ENCODE measurements at regions of chr16 and their contacts with region 1.

Region 1: GRCh38 chr16:71311553-71312158 is 22.5 kb upstream of the CMTR2 start:
- DNase-seq: peak; percentile 49
- H3K4me3 Mint-ChIP-seq: no peak overlapping the region
- H3K27ac Mint-ChIP-seq: no peak overlapping the region
- H3K4me1 Mint-ChIP-seq: no peaks in the 10 kb centered on the region
- H3K27me3 Mint-ChIP-seq: peaks cover 40% of the 10 kb centered on the region
- CTCF ChIP-seq: peak; percentile 81

Region 2: DNA sequence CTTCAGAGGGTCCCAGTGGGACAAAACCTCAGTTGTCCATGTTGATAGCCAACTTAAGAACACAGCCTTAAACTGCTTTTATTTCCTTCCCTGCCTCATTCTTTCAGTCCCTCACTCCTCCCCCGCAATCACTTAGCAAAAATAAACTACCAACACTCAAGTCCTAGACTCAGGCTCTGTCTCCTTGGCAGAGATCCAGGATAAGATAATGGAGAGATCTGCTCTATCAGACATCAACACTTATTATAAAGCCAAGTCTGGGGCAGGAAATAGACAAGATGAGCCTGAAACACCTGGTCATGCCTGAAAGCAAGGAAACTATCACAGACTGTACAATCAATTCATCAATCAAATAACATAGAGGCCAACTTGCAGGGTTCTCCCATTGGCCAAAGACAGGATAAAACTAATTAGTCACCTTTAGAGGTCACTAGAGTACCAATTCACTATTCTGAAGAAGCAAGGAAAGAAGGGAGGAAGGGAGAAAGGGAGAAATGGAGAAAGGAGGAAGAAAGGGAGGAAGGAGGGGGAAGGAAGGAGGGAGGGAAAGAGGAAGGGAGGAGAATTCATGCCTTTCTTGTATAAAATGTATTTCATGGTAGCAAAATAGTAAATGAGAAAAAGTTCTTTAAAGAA is 96.8 kb before region 1 on chr16:
- CTCF ChIA-PET with region 1: interaction called, 6 read pairs
- POLR2A ChIA-PET with region 1: no interaction called
- intact Hi-C with region 1: loop called (anchors 1 kb)
- DNase-seq: peak; percentile 20
- H3K4me3 Mint-ChIP-seq: no peak overlapping the region
- H3K27ac Mint-ChIP-seq: no peak overlapping the region
- H3K4me1 Mint-ChIP-seq: no peaks in the 10 kb centered on the region
- H3K27me3 Mint-ChIP-seq: peaks cover 51% of the 10 kb centered on the region
- CTCF ChIP-seq: peak; percentile 20

Region 3: GRCh38 chr16:71293919-71294318 is 17.7 kb before region 1 on chr16:
- CTCF ChIA-PET with region 1: interaction called, 43 read pairs
- POLR2A ChIA-PET with region 1: interaction called, 3 read pairs
- intact Hi-C with region 1: no loop called
- DNase-seq: no peak
- H3K4me3 Mint-ChIP-seq: no peak overlapping the region
- H3K27ac Mint-ChIP-seq: no peak overlapping the region
- H3K4me1 Mint-ChIP-seq: peaks cover 6% of the 10 kb centered on the region
- H3K27me3 Mint-ChIP-seq: peaks cover 57% of the 10 kb centered on the region
- CTCF ChIP-seq: no peak

Region 4: GRCh38 chr16:71328151-71328550 is 16.5 kb after region 1 on chr16:
- CTCF ChIA-PET with region 1: interaction called, 42 read pairs
- POLR2A ChIA-PET with region 1: no interaction called
- intact Hi-C with region 1: no loop called
- DNase-seq: no peak
- H3K4me3 Mint-ChIP-seq: no peak overlapping the region
- H3K27ac Mint-ChIP-seq: no peak overlapping the region
- H3K4me1 Mint-ChIP-seq: no peaks in the 10 kb centered on the region
- H3K27me3 Mint-ChIP-seq: no peaks in the 10 kb centered on the region
- CTCF ChIP-seq: no peak